ENCODE measurements at regions of chr10 and their contacts with region 1.

Region 1: DNA sequence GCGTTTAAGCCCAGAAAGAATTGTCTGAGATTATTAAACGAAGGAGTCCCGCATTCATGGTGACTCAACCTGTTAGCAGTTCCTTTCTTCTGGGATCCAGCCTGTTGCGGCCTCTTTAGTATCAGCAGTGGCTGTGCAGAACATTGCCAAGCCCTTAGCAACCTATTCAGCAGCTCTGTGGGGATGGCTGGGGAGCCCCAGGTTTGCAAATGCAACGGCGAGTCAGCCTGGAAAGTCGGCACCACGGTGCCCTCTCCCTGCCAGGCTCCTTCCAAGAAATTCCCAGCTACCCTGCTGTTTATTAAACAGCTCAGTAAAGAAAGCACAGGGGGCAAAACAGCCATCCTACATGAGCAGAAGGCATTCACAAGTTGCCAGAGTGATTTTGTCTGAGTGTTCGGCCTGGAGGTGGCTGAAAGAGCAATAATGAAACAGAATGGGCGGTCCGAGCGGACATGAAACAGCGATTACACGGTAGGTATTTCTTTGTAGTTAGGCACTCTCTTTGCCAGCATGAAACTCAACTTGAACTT is 198.3 kb downstream of the BAMBI start:
- DNase-seq: peak; percentile 73
- ATAC-seq: peak; percentile 72
- H3K4me3 ChIP-seq: peak overlapping the region; percentile 7 to 51 (median 35); a peak in 4 of 6 replicates
- H3K27ac ChIP-seq: no peak overlapping the region
- H3K4me1 ChIP-seq: peaks cover 72% of the 10 kb centered on the region
- H3K27me3 ChIP-seq: peaks cover 0 to 5% of the 10 kb centered on the region in 2 experiments; a peak in 3 of 5 replicates
- CTCF ChIP-seq: 0 out of 2 replicates have a peak, but pooled peaks have one; percentile 13
- EP300 ChIP-seq: no peak; a peak in 1 of 4 replicates
- POLR2A ChIP-seq: no peak
- RAD21 ChIP-seq: no peak

Region 2: DNA sequence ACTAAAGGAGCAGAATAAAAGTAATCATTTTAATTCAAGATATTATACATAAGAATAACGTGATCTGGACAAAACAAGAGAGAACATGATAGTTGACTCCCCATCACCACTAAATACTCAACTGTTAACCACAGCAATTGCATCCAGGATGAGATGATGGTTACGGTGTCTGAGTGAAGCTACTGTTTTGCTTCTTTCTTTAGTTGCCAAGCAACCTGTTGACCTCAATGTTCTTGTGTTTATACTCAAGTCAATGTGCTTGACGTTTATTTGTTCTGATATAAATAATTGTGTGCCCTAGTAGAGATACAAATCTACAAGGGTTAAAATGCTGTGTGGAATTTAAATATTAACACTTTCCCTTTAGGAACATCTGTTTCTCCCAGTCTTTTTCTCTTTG is 541.3 kb before region 1 on chr10:
- CTCF ChIA-PET with region 1: no interaction called
- POLR2A ChIA-PET with region 1: no interaction called
- in situ Hi-C with region 1: no loop called
- intact Hi-C with region 1: no loop called
- DNase-seq: no peak
- ATAC-seq: no peak
- H3K4me3 ChIP-seq: no peak overlapping the region
- H3K27ac ChIP-seq: no peak overlapping the region
- H3K4me1 ChIP-seq: peaks cover 4% of the 10 kb centered on the region
- H3K27me3 ChIP-seq: no peaks in the 10 kb centered on the region
- CTCF ChIP-seq: no peak
- EP300 ChIP-seq: no peak
- POLR2A ChIP-seq: no peak
- RAD21 ChIP-seq: no peak

Region 3: GRCh38 chr10:28355376-28355775 is 520.2 kb before region 1 on chr10:
- CTCF ChIA-PET with region 1: no interaction called
- POLR2A ChIA-PET with region 1: no interaction called
- in situ Hi-C with region 1: no loop called
- intact Hi-C with region 1: no loop called
- DNase-seq: no peak
- ATAC-seq: no peak
- H3K4me3 ChIP-seq: no peak overlapping the region
- H3K27ac ChIP-seq: no peak overlapping the region
- H3K4me1 ChIP-seq: peaks cover 35% of the 10 kb centered on the region
- H3K27me3 ChIP-seq: no peaks in the 10 kb centered on the region; a peak in 1 of 5 replicates
- CTCF ChIP-seq: no peak
- EP300 ChIP-seq: no peak
- POLR2A ChIP-seq: no peak
- RAD21 ChIP-seq: no peak

Region 4: DNA sequence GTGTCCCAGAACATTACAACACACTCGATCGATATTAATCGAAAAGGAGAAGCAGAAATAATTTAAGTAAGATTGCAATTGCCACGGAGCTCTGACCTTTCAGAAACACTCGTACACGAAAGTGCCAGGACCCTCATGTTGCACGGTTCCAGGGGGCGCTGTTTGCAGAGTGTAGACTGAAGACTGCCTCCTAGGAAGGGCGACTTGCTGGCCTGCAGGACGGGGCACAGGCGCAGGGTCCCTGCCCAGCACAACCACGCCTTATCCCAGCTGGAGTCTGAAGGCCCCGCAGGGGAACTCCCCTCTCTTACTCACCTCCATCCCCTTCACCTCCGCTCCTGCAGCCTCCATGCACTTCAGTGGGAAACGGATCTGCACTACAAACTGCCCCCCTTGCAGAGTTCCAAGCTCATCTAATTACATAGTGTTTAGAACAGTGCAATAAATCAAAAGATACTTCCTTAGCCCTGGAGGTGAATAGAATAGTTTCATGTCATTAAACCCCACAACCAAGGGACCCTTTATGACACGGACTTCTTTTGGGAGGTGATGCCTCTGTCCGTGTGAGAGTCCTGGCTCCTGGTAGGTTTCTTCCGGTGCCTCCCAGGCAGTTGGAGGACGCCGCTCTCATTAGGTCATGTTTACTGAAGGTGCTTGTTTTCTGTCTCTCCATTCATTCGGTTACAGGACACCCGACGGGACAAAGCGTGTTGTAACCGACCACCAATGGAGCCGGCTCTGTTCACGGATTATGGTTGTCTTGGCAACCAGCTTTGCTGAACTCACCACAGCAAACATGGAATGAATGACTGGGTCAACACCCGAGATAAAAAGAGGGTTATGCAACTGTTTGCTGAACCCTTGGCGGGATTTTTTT is 63.9 kb after region 1 on chr10:
- CTCF ChIA-PET with region 1: no interaction called
- POLR2A ChIA-PET with region 1: interaction called, 5 read pairs
- in situ Hi-C with region 1: no loop called
- intact Hi-C with region 1: loop called (anchors 10 kb)
- DNase-seq: peak; percentile 100
- ATAC-seq: peak; percentile 97
- H3K4me3 ChIP-seq: peak overlapping the region; percentile 53 to 80 (median 67)
- H3K27ac ChIP-seq: peak overlapping the region; percentile 99
- H3K4me1 ChIP-seq: peaks cover 56% of the 10 kb centered on the region
- H3K27me3 ChIP-seq: no peaks in the 10 kb centered on the region; a peak in 1 of 5 replicates
- CTCF ChIP-seq: peak; percentile 92
- EP300 ChIP-seq: peak; percentile 99 to 100
- POLR2A ChIP-seq: peak; percentile 66 to 85
- RAD21 ChIP-seq: peak; percentile 60

Region 5: DNA sequence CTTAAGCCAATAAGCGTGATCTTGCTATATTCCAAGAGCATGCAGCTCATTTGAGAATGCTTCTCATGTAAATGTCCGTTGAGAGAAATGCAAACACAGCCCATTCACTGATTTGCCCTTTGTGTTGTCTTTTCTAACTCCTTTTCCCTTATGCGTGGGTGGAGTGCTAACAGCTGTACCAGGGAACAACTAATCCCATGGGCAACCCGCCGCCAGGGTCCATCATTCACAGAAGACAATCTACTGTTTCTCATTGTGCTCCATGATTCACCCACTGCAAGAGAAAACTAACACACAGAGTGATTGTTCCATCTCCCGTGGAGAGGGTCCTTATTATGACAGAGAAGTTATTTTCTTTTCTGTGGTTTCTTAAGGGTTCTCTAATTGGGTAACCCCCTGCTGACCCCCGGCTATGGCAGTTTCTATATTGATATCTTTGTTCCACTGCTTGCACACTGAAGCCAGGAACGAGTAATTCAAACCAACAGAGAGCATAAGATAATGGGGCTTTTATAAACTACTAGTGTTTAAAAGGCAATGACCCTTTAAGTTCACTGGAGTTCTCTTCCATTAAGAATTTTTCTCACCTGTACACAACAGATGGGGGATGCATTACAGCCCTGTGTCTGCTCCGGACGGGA is 100.4 kb after region 1 on chr10:
- CTCF ChIA-PET with region 1: no interaction called
- POLR2A ChIA-PET with region 1: no interaction called
- in situ Hi-C with region 1: no loop called
- intact Hi-C with region 1: no loop called
- DNase-seq: peak; percentile 10
- ATAC-seq: no peak
- H3K4me3 ChIP-seq: no peak overlapping the region
- H3K27ac ChIP-seq: no peak overlapping the region
- H3K4me1 ChIP-seq: peaks cover 15% of the 10 kb centered on the region
- H3K27me3 ChIP-seq: no peaks in the 10 kb centered on the region
- CTCF ChIP-seq: no peak
- EP300 ChIP-seq: no peak
- POLR2A ChIP-seq: no peak
- RAD21 ChIP-seq: no peak

Measured in HepG2 (cell line).